ENCODE measurements at regions of chr2 and their contacts with region 1.

Region 1: DNA sequence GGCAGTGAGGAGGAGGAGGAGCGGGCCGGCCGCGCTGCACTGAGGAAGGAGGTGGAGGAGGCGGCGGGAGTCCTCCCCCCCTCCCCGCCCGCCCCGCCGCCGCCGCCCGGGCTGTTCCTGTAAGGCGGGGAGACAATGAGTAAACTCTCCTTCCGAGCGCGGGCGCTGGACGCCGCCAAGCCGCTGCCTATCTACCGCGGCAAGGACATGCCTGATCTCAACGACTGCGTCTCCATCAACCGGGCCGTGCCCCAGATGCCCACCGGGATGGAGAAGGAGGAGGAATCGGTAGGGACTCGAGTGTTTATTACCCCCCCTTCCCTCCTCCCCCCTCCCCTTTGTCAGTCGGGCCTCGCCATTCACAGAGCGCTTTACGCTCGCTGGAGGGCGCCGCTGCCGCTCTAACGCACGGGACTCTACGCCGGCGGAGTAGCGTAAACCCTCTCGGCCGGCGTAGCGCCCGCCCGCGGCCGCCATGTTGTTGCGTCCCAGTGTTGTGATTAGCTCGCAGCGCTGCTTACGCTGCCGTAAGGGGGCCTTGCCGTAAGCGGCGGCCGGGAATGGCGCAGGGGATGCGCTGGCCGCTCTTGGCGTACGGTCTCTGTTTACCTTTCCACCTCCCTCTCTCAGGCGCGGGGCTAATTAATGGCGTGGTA is 460 bp downstream of the EPC2 start:
- DNase-seq: peak; percentile 97 to 98
- ATAC-seq: peak; percentile 98
- H3K4me3 ChIP-seq: peak overlapping the region; percentile 77 to 99
- H3K27ac ChIP-seq: peak overlapping the region; percentile 92 to 99
- H3K4me1 ChIP-seq: peaks cover 0 to 4% of the 10 kb centered on the region in 2 donors
- H3K27me3 ChIP-seq: no peaks in the 10 kb centered on the region

Region 2: DNA sequence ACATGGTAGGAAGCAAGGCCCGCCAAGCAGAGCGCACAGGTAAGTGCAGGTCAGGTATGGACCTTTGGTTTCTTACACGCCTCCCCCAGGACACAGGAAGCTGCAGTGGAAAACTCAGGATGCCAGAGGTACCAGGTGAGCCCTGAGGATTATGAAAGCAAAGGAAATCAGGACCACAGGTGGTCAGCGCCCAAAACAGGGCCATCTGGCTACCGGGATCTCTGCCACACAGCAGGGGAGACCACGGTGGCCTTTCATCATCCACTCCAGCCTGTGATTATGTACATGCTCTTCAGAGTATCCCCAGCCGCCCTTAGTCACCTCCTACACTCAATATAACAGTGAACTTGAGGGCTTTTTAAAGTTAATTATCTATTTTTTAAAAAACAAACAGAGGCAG is 126.0 kb before region 1 on chr2:
- intact Hi-C with region 1: loop called in 1 of 2 experiments (anchors 10 kb)
- DNase-seq: no peak
- ATAC-seq: peak; percentile 19
- H3K4me3 ChIP-seq: no peak overlapping the region
- H3K27ac ChIP-seq: no peak overlapping the region
- H3K4me1 ChIP-seq: peaks cover 3 to 6% of the 10 kb centered on the region in 2 donors
- H3K27me3 ChIP-seq: no peaks in the 10 kb centered on the region

Region 3: GRCh38 chr2:148781544-148781943 is 136.5 kb after region 1 on chr2:
- intact Hi-C with region 1: loop called in 1 of 2 experiments (anchors 10 kb)
- DNase-seq: no peak
- ATAC-seq: no peak
- H3K4me3 ChIP-seq: no peak overlapping the region
- H3K27ac ChIP-seq: no peak overlapping the region
- H3K4me1 ChIP-seq: no peaks in the 10 kb centered on the region
- H3K27me3 ChIP-seq: no peaks in the 10 kb centered on the region

Region 4: DNA sequence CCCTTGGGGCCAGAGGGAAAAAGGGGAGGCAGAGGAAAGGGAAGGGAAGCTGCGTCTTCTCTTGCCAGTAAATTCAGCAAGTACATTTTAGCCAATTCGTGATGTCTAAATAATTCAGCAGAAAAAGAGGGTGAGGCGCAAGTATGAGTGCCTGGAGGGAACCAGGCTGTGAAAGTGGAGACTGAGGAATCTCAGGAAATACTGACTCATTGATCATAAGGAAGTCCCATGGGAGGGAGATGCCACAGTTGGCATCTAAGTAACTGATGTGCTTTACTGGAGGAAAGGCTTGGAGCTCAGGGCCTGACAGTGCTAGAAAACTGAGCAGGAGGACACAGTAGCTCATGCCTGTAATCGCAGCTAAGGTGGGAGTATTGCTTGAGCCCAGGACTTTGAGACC is 261.1 kb after region 1 on chr2:
- intact Hi-C with region 1: no loop called
- DNase-seq: no peak
- ATAC-seq: no peak
- H3K4me3 ChIP-seq: no peak overlapping the region
- H3K27ac ChIP-seq: no peak overlapping the region
- H3K4me1 ChIP-seq: no peaks in the 10 kb centered on the region
- H3K27me3 ChIP-seq: no peaks in the 10 kb centered on the region

Measured in aorta (tissue), 5 donors.